Caco-2 (cell line): ENCODE measurements at regions of chr12 and their contacts with region 1.

Region 1: GRCh38 chr12:24427776-24428175 is 478.3 kb upstream of the SOX5 start:
- DNase-seq: no peak
- H3K4me3 ChIP-seq: no peak overlapping the region
- H3K4me3 Mint-ChIP-seq: no peak overlapping the region
- H3K27ac Mint-ChIP-seq: no peak overlapping the region
- H3K4me1 ChIP-seq: no peaks in the 10 kb centered on the region
- H3K4me1 Mint-ChIP-seq: peaks cover 27% of the 10 kb centered on the region
- H3K27me3 ChIP-seq: no peaks in the 10 kb centered on the region
- H3K27me3 Mint-ChIP-seq: no peaks in the 10 kb centered on the region
- CTCF ChIP-seq: no peak

Region 2: GRCh38 chr12:24285448-24285847 is 142.3 kb before region 1 on chr12:
- CTCF ChIA-PET with region 1: no interaction called
- POLR2A ChIA-PET with region 1: no interaction called
- intact Hi-C with region 1: no loop called
- DNase-seq: no peak
- H3K4me3 ChIP-seq: no peak overlapping the region
- H3K4me3 Mint-ChIP-seq: no peak overlapping the region
- H3K27ac Mint-ChIP-seq: peak overlapping the region; percentile 40
- H3K4me1 ChIP-seq: no peaks in the 10 kb centered on the region
- H3K4me1 Mint-ChIP-seq: peaks cover 8% of the 10 kb centered on the region
- H3K27me3 ChIP-seq: no peaks in the 10 kb centered on the region
- H3K27me3 Mint-ChIP-seq: no peaks in the 10 kb centered on the region
- CTCF ChIP-seq: no peak

Region 3: DNA sequence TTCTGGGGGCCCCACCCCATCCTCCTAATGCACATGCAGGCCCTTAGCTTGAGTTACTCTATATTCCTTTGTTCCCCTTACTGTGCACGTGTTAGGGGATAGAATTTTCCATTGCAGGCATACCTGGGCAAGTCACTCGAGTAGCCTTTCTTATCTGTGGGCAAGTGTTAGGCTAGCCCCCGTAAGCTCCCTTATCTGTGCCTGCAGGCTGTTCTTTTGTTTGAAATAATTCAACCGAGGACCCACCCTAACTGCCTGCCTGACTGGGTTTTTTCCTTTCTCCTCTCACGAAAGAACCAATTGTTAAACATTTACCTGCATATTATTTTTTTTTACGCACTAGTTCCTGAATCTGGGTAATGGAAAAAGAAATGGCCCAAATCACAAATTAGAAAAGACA is 542.4 kb after region 1 on chr12:
- CTCF ChIA-PET with region 1: no interaction called
- POLR2A ChIA-PET with region 1: interaction called, 11 read pairs
- intact Hi-C with region 1: no loop called
- DNase-seq: no peak
- H3K4me3 ChIP-seq: no peak overlapping the region
- H3K4me3 Mint-ChIP-seq: no peak overlapping the region
- H3K27ac Mint-ChIP-seq: no peak overlapping the region
- H3K4me1 ChIP-seq: 0 out of 2 replicates have a peak, but pooled peaks cover 3% of the 10 kb centered on the region
- H3K4me1 Mint-ChIP-seq: peaks cover 6% of the 10 kb centered on the region
- H3K27me3 ChIP-seq: no peaks in the 10 kb centered on the region
- H3K27me3 Mint-ChIP-seq: no peaks in the 10 kb centered on the region
- CTCF ChIP-seq: no peak